Activated CD4-positive, alpha-beta T cell treated with anti-CD3 and anti-CD28 coated beads, Interleukin-2, amount 10 ng/mL, durations not matched to agents 24 days and 14 days (primary cell): ENCODE measurements at regions of chr11 and their contacts with region 1.

Region 1: GRCh38 chr11:96235751-96236150 is 107.2 kb downstream of the MAML2 start:
- DNase-seq: peak; percentile 86
- H3K4me3 Mint-ChIP-seq: peak overlapping the region; percentile 76
- H3K27ac Mint-ChIP-seq: peak overlapping the region; percentile 95
- H3K4me1 Mint-ChIP-seq: peaks cover 30% of the 10 kb centered on the region
- H3K27me3 Mint-ChIP-seq: no peaks in the 10 kb centered on the region

Region 2: DNA sequence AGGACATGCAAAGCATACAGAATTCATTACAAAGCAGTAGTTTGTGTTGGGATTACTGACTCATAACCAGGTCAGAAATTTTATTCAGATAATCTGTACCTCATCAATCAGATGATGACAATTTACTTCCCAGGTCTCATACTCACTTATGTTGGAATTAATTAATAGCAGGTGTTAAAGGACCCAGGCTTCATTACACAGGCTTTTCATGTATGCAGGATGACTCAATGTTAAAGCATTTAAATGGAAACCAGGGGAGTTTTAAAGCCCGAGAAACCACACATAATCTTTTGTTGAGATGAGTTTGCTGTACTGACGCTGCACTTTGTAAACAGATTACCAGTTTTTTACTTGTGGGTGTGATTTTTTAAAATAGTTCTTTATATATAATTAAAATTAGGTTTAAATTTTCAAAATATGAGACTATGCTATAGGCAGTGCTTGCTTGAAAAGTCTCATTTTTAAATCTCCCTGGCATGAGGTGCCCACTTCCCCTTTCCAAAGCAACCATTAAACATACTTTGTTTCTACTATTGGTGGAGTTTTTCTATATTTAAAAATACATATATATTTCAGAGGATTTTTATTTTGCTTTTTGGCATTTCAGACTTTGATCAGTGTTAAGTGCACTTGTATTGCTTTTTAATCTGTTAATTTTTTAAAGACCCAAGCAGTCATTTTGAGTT is 404.4 kb before region 1 on chr11:
- intact Hi-C with region 1: no loop called
- DNase-seq: no peak
- H3K4me3 Mint-ChIP-seq: no peak overlapping the region
- H3K27ac Mint-ChIP-seq: no peak overlapping the region
- H3K4me1 Mint-ChIP-seq: peaks cover 4% of the 10 kb centered on the region
- H3K27me3 Mint-ChIP-seq: no peaks in the 10 kb centered on the region

Region 3: DNA sequence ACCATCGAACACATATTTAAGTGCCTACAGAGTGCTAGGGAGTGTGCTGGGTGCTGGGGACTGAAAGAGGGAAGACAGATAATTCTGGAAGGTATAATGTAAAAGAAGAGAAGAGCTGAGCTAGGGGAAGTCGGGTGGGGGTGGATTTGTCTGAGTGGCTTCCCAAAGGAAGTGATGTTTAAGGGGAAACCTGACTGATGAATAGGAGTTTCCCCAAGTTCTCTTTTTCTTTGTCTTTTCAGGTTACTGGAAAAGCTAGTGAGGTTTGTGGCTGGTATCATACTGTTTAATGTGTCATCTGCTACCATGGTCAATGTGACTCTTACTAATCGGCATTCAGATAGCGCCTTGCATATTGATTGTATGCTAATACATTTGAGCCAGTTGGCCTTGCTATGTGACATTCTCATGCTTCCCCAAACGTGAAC is 160.2 kb before region 1 on chr11:
- intact Hi-C with region 1: loop called (anchors 5 kb)
- DNase-seq: no peak
- H3K4me3 Mint-ChIP-seq: peak overlapping the region; percentile 47
- H3K27ac Mint-ChIP-seq: peak overlapping the region; percentile 58
- H3K4me1 Mint-ChIP-seq: peaks cover 51% of the 10 kb centered on the region
- H3K27me3 Mint-ChIP-seq: no peaks in the 10 kb centered on the region

Region 4: DNA sequence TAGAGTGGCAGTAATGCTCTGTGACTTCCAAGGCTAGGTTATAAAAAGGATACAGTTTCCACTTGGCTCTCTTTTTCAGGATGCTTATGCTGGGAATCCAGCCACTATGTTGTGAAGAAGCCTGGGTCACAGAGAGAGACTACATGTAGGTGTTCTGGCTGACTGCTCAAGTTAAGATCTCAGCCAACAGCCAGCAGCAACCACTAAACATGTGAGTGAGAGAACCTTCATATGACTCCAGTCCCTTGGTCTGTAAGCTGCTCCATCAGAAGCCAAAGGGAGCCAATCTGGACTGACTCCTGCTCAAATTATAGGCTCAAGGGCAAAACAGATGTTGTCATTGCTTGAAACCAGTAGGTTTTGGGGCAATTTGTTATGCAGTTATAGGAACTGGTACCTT is 55.4 kb before region 1 on chr11:
- intact Hi-C with region 1: no loop called
- DNase-seq: no peak
- H3K4me3 Mint-ChIP-seq: no peak overlapping the region
- H3K27ac Mint-ChIP-seq: no peak overlapping the region
- H3K4me1 Mint-ChIP-seq: peaks cover 32% of the 10 kb centered on the region
- H3K27me3 Mint-ChIP-seq: no peaks in the 10 kb centered on the region

Region 5: DNA sequence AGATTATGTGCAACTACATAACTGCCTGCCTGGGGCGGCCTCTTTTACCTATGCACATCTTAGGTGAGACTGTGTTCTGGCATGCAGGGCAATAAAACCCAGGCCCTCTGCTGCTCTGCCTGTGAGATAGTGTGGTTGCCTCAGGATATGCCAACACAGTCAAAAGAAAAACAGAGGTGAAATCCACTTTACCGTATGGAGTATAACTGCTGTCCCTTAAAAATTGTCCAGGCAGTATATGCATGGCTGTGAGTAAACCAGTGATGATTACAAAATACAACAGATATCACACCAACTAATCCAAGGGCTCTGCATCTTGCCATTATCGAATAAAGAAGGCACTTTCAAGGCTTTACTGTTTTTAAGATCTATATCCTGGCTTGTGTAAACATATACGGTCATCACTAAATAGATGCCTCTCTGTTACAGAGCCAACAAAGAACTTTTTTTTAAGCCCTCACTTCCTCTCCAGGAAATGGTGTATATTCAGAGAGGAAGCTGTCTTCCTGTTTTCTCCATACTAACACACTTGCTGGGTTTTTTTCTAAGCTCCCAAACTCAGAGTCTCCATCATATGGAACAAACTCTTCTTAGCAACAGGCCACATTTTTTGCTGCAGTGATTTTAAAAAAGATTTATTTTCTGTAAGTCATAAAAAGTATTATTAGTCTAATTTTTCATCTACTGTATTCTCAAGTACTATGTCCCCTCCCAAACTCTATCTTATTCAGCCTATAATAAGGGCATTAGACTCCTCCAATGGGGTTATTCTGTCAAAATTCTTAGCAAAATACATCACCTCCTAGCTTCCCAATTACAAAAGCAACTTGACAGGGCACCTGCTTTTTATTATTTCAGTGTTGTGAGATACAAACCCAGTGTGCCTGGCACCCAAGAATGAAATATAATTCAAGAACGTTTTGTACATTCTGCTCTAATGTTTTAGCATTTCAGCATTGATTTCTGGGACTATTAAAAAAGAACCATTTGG is 28.0 kb before region 1 on chr11:
- intact Hi-C with region 1: loop called (anchors 1 kb)
- DNase-seq: peak; percentile 78
- H3K4me3 Mint-ChIP-seq: peak overlapping the region; percentile 74
- H3K27ac Mint-ChIP-seq: peak overlapping the region; percentile 93
- H3K4me1 Mint-ChIP-seq: peaks cover 71% of the 10 kb centered on the region
- H3K27me3 Mint-ChIP-seq: no peaks in the 10 kb centered on the region

Region 6: GRCh38 chr11:96254087-96254486 is 18.3 kb after region 1 on chr11:
- intact Hi-C with region 1: loop called (anchors 1 kb)
- DNase-seq: peak; percentile 83
- H3K4me3 Mint-ChIP-seq: peak overlapping the region; percentile 79
- H3K27ac Mint-ChIP-seq: peak overlapping the region; percentile 84
- H3K4me1 Mint-ChIP-seq: peaks cover 73% of the 10 kb centered on the region
- H3K27me3 Mint-ChIP-seq: no peaks in the 10 kb centered on the region

Region 7: GRCh38 chr11:96292291-96293010 is 56.7 kb after region 1 on chr11:
- intact Hi-C with region 1: no loop called
- DNase-seq: no peak
- H3K4me3 Mint-ChIP-seq: no peak overlapping the region
- H3K27ac Mint-ChIP-seq: no peak overlapping the region
- H3K4me1 Mint-ChIP-seq: peaks cover 45% of the 10 kb centered on the region
- H3K27me3 Mint-ChIP-seq: no peaks in the 10 kb centered on the region

Region 8: GRCh38 chr11:96595011-96595410 is 359.3 kb after region 1 on chr11:
- intact Hi-C with region 1: no loop called
- DNase-seq: no peak
- H3K4me3 Mint-ChIP-seq: no peak overlapping the region
- H3K27ac Mint-ChIP-seq: no peak overlapping the region
- H3K4me1 Mint-ChIP-seq: no peaks in the 10 kb centered on the region
- H3K27me3 Mint-ChIP-seq: no peaks in the 10 kb centered on the region